Heart left ventricle (tissue), 16 donors: ENCODE measurements at regions of chr1 and their contacts with region 1.

Region 1: GRCh38 chr1:204348722-204349121 is 11.0 kb downstream of the PLEKHA6 start:
- DNase-seq: peak; percentile 86 to 92 (median 87)
- ATAC-seq: peak; percentile 88 to 98 (median 94)
- H3K4me3 ChIP-seq: no peak overlapping the region
- H3K27ac ChIP-seq: peak overlapping the region in 11 of 12 donors; percentile 9 to 86 (median 73)
- H3K4me1 ChIP-seq: peaks cover 0 to 37% (median 25%) of the 10 kb centered on the region in 12 donors
- H3K27me3 ChIP-seq: peaks cover 0 to 3% (median 0%) of the 10 kb centered on the region in 9 donors
- CTCF ChIP-seq: peak in 1 of 12 donors; percentile 21
- POLR2A ChIP-seq: peak in 1 of 2 donors; percentile 18

Region 2: DNA sequence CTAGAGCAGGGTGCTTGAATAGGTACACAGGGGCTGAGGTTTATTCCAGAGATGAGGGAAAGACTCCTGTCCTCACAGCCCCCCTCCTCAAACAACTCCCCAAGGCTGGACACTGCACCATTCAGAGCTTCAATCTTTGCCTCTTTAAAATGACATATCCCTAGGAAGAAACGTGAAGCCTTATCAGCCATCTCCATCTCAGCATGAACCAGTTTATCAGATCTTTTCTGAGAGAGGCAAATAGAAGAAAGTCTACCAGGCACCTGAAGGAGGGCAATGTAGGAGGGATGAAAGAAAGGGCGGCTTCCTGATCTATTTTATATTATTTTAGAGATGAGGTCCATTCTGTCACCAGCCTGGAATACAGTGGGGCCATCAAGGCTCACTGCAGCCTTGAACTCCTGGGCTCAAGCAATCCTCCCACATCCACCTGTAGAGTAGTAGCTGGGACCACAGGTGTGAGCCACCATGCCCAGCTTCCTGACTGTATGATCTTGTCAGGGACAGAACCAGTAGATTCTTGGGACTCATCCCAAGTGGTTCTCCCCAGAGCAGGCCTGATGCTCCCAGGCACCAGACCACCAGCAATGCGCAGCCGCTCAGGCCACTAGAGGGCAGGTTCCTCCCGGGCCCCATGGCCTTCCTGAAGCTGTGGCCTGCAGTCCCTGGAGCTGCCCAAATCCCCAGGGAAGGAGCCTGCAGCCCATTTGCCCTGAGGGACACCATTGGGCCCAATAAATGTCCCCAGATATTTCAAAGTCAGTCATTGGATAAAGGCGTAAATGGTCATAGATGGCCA is 90.6 kb before region 1 on chr1:
- intact Hi-C with region 1: loop called in 1 of 10 experiments (anchors 5 kb)
- DNase-seq: peak; percentile 53 to 79 (median 66)
- ATAC-seq: peak; percentile 48 to 72 (median 65)
- H3K4me3 ChIP-seq: no peak overlapping the region
- H3K27ac ChIP-seq: no peak overlapping the region
- H3K4me1 ChIP-seq: peaks cover 0 to 15% (median 3%) of the 10 kb centered on the region in 12 donors
- H3K27me3 ChIP-seq: no peaks in the 10 kb centered on the region
- CTCF ChIP-seq: peak; percentile 60 to 80 (median 65)
- POLR2A ChIP-seq: no peak

Region 3: DNA sequence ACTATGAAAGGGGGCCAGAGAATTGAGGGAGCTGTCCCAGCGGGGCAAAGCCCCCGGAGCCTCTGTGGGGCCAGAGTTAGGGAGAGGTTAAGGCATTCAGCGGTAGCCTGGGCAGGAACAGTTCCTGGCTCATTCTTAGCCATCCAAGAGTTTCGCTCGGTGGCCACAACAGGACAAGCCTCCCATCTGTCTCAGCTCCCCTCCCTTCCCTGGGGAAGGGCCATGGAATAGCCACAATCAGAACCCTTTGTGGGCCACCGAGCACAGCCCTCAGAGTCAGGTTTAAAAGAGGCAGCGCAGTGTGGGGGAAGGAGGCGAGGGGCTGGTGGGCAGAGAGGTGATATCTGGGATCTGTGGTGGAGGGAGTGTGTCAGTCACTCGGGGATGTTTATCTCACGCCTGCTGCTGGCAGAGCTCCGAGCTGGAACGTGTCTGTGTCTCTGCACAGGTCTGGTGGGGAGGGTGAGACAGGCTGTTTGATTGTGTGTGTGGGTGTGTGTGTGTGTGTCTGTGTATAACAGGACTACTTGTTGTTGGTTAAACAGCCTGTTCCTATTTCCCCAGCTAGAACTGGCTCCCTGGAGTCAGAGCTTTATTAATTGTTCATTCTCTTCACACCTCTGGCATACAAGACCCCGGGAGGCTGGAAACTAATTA is 85.3 kb before region 1 on chr1:
- intact Hi-C with region 1: loop called in 2 of 10 experiments (anchors 5 kb)
- DNase-seq: peak in 1 of 5 donors; percentile 65
- ATAC-seq: peak; percentile 21 to 49 (median 44)
- H3K4me3 ChIP-seq: no peak overlapping the region
- H3K27ac ChIP-seq: peak overlapping the region in 6 of 12 donors; percentile 24 to 65 (median 41)
- H3K4me1 ChIP-seq: peaks cover 0 to 44% (median 28%) of the 10 kb centered on the region in 12 donors
- H3K27me3 ChIP-seq: no peaks in the 10 kb centered on the region
- CTCF ChIP-seq: no peak
- POLR2A ChIP-seq: no peak

Region 4: GRCh38 chr1:204296431-204296988 is 52.2 kb before region 1 on chr1:
- intact Hi-C with region 1: loop called in 1 of 10 experiments (anchors 10 kb)
- DNase-seq: peak in 4 of 5 donors; percentile 32 to 69 (median 41)
- ATAC-seq: peak in 3 of 4 donors; percentile 49 to 63 (median 62)
- H3K4me3 ChIP-seq: no peak overlapping the region
- H3K27ac ChIP-seq: peak overlapping the region in 11 of 12 donors; percentile 17 to 91 (median 42)
- H3K4me1 ChIP-seq: peaks cover 0 to 76% (median 36%) of the 10 kb centered on the region in 12 donors
- H3K27me3 ChIP-seq: no peaks in the 10 kb centered on the region
- CTCF ChIP-seq: peak in 3 of 12 donors; percentile 5 to 35 (median 21)
- POLR2A ChIP-seq: no peak

Region 5: DNA sequence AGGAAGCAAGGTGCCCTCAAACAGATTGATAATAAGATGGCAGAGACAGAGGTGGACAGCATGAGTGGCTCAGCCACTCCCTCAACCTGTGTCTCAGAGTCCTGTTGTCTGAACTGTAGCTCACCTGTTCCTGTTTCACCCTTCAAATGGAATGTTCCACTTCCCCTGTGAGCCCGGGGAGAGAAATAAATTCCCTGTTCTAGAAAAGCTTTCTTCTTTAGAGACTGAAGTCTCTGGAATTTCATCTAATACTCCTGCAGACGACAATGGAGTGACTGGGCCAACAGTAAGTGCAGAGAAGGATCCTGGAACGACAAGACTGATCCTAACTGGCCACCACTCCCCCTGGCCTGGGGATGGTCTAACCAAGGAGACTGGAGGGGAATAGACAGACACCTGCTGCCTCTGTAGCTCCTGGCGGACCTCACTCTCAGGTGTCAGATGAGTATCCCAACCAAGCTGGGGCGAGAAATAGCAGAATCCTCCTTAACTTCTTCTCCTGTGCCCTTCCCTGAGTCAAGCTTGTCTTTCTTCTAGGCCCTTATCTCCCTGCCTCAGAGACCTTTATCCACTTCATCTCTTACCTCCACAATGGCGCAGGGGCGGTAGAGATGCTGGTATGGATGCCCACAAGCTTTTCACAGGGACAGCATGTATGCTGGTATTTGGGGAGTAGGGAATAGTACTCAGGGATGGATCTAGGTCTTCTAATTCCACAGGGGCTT is 34.4 kb before region 1 on chr1:
- intact Hi-C with region 1: loop called in 1 of 10 experiments (anchors 5 kb)
- DNase-seq: no peak
- ATAC-seq: no peak
- H3K4me3 ChIP-seq: no peak overlapping the region
- H3K27ac ChIP-seq: no peak overlapping the region
- H3K4me1 ChIP-seq: peaks cover 0 to 26% (median 8%) of the 10 kb centered on the region in 12 donors
- H3K27me3 ChIP-seq: no peaks in the 10 kb centered on the region
- CTCF ChIP-seq: no peak
- POLR2A ChIP-seq: no peak

Region 6: DNA sequence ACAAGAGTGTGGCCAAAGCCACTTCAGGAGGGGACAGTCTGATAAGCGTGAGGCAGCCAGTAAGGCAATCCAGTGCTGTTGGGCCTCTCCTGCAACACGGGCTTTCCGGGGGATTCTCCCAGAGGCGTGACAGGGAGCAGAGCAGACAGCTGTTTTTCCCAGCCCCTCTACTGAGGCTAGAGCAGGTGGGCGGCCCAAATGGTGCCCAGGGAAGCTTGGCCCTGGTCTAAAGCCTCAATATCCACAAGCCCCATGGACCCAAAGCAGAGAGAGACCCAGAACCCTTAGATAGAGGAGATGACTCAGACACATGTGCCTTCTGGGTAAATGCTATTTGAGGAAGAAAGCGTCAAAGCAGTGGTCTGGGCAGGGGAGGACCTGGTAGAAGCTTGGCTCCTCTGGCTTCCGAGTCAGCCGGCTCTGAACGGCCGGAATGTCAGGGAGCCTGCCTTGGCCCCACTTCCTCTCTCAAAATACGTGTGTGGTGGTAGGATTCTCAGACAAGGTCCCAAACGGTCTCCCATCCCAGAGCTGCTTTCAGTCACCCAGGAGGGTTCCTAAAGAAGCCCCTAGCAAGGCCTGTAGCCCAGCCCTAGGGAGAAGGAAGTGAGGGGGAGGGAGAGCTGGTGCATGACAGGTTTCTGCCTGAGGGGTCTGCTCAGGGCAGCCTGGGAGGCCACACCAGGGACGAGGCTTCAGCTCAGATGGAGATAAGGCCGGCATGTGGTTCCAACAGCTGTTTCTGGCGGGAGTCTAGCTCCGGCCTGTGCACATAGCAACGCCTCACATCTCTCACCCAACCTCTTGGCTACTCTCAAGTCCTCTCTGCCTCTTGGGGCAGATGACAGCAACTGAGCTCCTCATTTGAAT is 117.1 kb after region 1 on chr1:
- intact Hi-C with region 1: no loop called
- DNase-seq: peak in 3 of 5 donors; percentile 53 to 67 (median 54)
- ATAC-seq: peak; percentile 3 to 27 (median 20)
- H3K4me3 ChIP-seq: peak overlapping the region in 9 of 12 donors; percentile 28 to 48 (median 36)
- H3K27ac ChIP-seq: peak overlapping the region; percentile 77 to 99 (median 90)
- H3K4me1 ChIP-seq: peaks cover 24 to 93% (median 79%) of the 10 kb centered on the region in 12 donors
- H3K27me3 ChIP-seq: no peaks in the 10 kb centered on the region
- CTCF ChIP-seq: no peak
- POLR2A ChIP-seq: no peak